ENCODE measurements at regions of chr6 and their contacts with region 1.

Region 1: GRCh38 chr6:13614926-13615798 is at the start of gene NOL7:
- DNase-seq: peak; percentile 96 to 99 (median 98)
- ATAC-seq: peak; percentile 98
- H3K4me3 ChIP-seq: peak within 1 kb of the TSS; percentile 85
- H3K4me3 Mint-ChIP-seq: peak within 1 kb of the TSS; percentile 82 to 98 (median 94)
- H3K27ac ChIP-seq: peak within 1 kb of the TSS; percentile 81
- H3K27ac Mint-ChIP-seq: peak within 1 kb of the TSS; percentile 85 to 97 (median 94)
- H3K4me1 ChIP-seq: peaks cover 8 to 26% of the 10 kb centered on the region in 2 donors
- H3K4me1 Mint-ChIP-seq: peaks cover 25 to 55% (median 47%) of the 10 kb centered on the region in 7 donors
- H3K27me3 ChIP-seq: no peaks in the 10 kb centered on the region
- H3K27me3 Mint-ChIP-seq: peaks cover 0 to 2% (median 0%) of the 10 kb centered on the region in 5 donors
- total RNA-seq, gene NOL7: 49.1 to 65.2 (median 62.1) TPM

Region 2: DNA sequence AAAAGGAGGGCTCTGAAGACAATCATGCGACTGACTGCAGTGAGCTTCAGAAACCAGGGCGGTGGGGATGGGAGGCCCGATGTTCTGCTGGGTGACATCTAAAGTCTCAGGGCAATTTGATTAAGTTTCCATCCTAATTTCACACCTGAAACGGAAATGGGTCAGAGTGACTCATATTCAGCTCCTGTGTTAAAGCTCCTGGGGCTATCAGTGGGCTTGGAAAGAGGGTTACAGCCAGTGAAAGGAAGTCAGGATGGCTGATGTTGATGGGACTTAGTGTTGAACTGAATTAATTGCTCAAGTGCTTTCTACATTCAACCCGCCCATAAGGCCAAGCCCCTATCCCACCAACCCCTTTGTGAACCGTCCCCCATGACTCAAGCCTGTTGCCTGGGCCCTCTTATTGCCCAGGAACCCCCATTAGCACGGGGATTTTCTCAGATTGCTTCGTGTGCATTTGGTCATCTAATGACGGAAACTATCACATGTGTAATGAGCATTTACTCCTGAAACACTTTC is 239.7 kb before region 1 on chr6:
- CTCF ChIA-PET with region 1: no interaction called
- POLR2A ChIA-PET with region 1: no interaction called
- intact Hi-C with region 1: no loop called
- DNase-seq: peak in 1 of 9 donors; percentile 35
- ATAC-seq: peak; percentile 29
- H3K4me3 ChIP-seq: peak overlapping the region; percentile 7
- H3K4me3 Mint-ChIP-seq: no peak overlapping the region
- H3K27ac ChIP-seq: no peak overlapping the region
- H3K27ac Mint-ChIP-seq: peak overlapping the region in 1 of 9 donors; percentile 26
- H3K4me1 ChIP-seq: peaks cover 0 to 9% of the 10 kb centered on the region in 2 donors
- H3K4me1 Mint-ChIP-seq: peaks cover 0 to 24% (median 2%) of the 10 kb centered on the region in 7 donors
- H3K27me3 ChIP-seq: no peaks in the 10 kb centered on the region
- H3K27me3 Mint-ChIP-seq: no peaks in the 10 kb centered on the region

Region 3: GRCh38 chr6:13604546-13605416 is 10.4 kb before region 1 on chr6:
- CTCF ChIA-PET with region 1: interaction called, 4 read pairs
- POLR2A ChIA-PET with region 1: interaction called, 12 read pairs
- intact Hi-C with region 1: no loop called
- DNase-seq: no peak
- ATAC-seq: no peak
- H3K4me3 ChIP-seq: no peak overlapping the region
- H3K4me3 Mint-ChIP-seq: no peak overlapping the region
- H3K27ac ChIP-seq: no peak overlapping the region
- H3K27ac Mint-ChIP-seq: no peak overlapping the region
- H3K4me1 ChIP-seq: no peaks in the 10 kb centered on the region
- H3K4me1 Mint-ChIP-seq: peaks cover 0 to 3% (median 0%) of the 10 kb centered on the region in 7 donors
- H3K27me3 ChIP-seq: no peaks in the 10 kb centered on the region
- H3K27me3 Mint-ChIP-seq: no peaks in the 10 kb centered on the region

Region 4: GRCh38 chr6:13681305-13682061 is 66.3 kb after region 1 on chr6:
- CTCF ChIA-PET with region 1: interaction called, 5 read pairs
- POLR2A ChIA-PET with region 1: interaction called, 8 read pairs
- intact Hi-C with region 1: loop called in 1 of 2 experiments (anchors 1 kb)
- DNase-seq: peak in 7 of 9 donors; percentile 41 to 78 (median 65)
- ATAC-seq: peak; percentile 82
- H3K4me3 ChIP-seq: peak overlapping the region; percentile 4
- H3K4me3 Mint-ChIP-seq: peak overlapping the region; percentile 38 to 75 (median 58)
- H3K27ac ChIP-seq: peak overlapping the region; percentile 54
- H3K27ac Mint-ChIP-seq: peak overlapping the region; percentile 63 to 92 (median 86)
- H3K4me1 ChIP-seq: peaks cover 36 to 42% of the 10 kb centered on the region in 2 donors
- H3K4me1 Mint-ChIP-seq: peaks cover 34 to 74% (median 65%) of the 10 kb centered on the region in 7 donors
- H3K27me3 ChIP-seq: no peaks in the 10 kb centered on the region
- H3K27me3 Mint-ChIP-seq: no peaks in the 10 kb centered on the region

Region 5: DNA sequence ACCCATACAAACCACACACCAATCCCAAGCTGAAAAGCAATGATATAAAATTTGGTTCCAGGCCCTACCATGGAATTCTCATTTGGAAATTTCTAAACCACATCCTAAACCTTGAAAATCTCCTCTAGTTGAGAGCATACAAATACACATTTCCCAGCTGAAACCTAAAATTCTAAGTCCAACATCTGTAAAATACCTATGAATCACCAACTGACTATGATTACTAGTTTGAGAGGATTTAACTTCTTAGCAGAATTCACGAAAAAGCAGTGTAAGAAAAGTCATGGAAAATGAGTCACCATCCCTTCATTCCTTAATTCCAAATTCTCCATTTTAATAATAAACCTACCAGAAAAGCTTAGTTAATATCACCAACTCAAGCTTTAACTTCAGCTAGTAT is 81.1 kb after region 1 on chr6:
- CTCF ChIA-PET with region 1: interaction called, 3 read pairs
- POLR2A ChIA-PET with region 1: interaction called, 20 read pairs
- intact Hi-C with region 1: no loop called
- DNase-seq: no peak
- ATAC-seq: no peak
- H3K4me3 ChIP-seq: no peak overlapping the region
- H3K4me3 Mint-ChIP-seq: peak overlapping the region in 4 of 10 donors; percentile 28 to 66 (median 39)
- H3K27ac ChIP-seq: peak overlapping the region; percentile 60
- H3K27ac Mint-ChIP-seq: peak overlapping the region in 7 of 9 donors; percentile 56 to 92 (median 83)
- H3K4me1 ChIP-seq: peaks cover 31 to 42% of the 10 kb centered on the region in 2 donors
- H3K4me1 Mint-ChIP-seq: peaks cover 42 to 82% (median 73%) of the 10 kb centered on the region in 7 donors
- H3K27me3 ChIP-seq: no peaks in the 10 kb centered on the region
- H3K27me3 Mint-ChIP-seq: no peaks in the 10 kb centered on the region

Region 6: DNA sequence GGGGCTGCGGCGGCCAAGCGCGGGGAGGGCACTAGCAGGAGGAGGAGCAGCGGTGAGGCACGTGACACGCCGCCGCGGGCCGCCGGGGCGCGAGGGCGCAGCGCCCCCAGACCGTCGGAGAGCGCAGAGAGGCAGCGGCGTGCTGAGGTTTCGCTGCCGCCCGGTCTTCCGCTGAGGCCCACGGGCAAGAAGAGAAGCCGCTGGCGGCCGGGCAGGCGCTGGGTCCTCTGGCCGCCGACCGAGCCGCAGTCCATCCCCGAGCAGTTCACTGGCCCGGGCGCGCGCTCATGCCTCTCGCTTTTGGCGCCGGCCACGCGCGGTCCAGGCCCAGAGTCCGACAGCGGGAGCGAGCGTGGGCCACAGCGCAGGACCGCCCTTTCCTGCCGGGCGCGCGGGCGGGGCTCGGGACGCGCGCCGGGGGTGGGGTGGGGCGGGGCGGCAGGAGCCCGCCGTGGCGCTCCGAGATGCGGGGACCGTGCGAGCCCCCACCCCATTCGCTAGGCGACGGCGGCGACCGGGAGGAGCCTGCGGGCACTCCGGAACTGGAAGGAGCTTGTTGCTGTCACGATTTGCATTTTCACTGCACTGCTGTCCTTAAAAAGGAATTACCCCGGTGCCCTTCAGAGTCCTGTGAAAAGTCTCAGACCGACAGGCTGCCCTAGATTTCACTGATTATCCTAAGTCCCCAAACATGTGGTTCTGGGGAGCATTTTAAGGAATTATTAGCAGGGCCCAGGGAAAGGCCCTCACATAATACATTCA is 199.2 kb after region 1 on chr6 and contains the start of gene MCUR1:
- CTCF ChIA-PET with region 1: interaction called, 3 read pairs
- POLR2A ChIA-PET with region 1: interaction called, 5 read pairs
- intact Hi-C with region 1: loop called (anchors 1 kb)
- DNase-seq: peak; percentile 69 to 87 (median 76)
- ATAC-seq: peak; percentile 91
- H3K4me3 ChIP-seq: peak within 1 kb of the TSS; percentile 71
- H3K4me3 Mint-ChIP-seq: peak within 1 kb of the TSS; percentile 87 to 92 (median 90)
- H3K27ac ChIP-seq: peak within 1 kb of the TSS; percentile 82
- H3K27ac Mint-ChIP-seq: peak within 1 kb of the TSS; percentile 60 to 93 (median 85)
- H3K4me1 ChIP-seq: peaks cover 0 to 13% of the 10 kb centered on the region in 2 donors
- H3K4me1 Mint-ChIP-seq: peaks cover 17 to 40% (median 38%) of the 10 kb centered on the region in 7 donors
- H3K27me3 ChIP-seq: no peaks in the 10 kb centered on the region
- H3K27me3 Mint-ChIP-seq: peaks cover 0 to 25% (median 0%) of the 10 kb centered on the region in 5 donors
- total RNA-seq, gene MCUR1: 5.7 to 20.6 (median 10.0) TPM